Vagina (tissue), 2 donors: ENCODE measurements at regions of chr3 and their contacts with region 1.

Region 1: DNA sequence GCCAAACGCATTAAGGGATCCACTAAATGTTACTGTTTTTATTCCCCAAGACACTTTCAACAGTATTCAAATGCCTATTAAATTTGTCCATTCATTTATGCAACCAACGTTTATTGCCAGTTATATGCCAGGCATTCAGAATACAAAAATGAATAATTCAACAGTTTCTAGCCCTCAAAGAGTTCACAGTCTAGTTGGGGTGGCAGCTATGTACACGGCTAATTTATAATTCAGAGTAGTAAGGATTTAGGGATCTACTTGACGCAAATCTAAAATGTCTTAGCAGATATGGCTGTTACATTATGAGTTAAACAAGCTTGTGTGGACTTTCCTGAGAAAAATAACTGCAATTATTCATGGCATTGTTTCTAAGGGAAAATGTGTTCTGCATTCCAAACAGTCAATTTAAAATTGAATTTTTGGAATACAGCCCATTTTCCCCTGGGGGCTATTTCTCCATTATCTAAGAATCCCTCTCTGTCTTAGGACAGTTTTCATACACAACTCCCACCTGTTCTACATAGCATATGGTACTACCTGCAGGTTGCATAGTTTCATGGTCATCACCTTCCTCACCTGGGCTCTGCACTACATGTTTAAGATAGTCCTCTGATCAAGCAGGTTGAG is 11.5 kb upstream of the MSL2 start:
- DNase-seq: no peak
- H3K4me3 ChIP-seq: no peak overlapping the region
- H3K27ac ChIP-seq: no peak overlapping the region
- H3K4me1 ChIP-seq: no peaks in the 10 kb centered on the region
- H3K27me3 ChIP-seq: no peaks in the 10 kb centered on the region
- CTCF ChIP-seq: no peak
- POLR2A ChIP-seq: no peak

Region 2: GRCh38 chr3:136134091-136134490 is 73.5 kb before region 1 on chr3:
- intact Hi-C with region 1: loop called (anchors 2 kb)
- DNase-seq: no peak
- H3K4me3 ChIP-seq: no peak overlapping the region
- H3K27ac ChIP-seq: no peak overlapping the region
- H3K4me1 ChIP-seq: no peaks in the 10 kb centered on the region
- H3K27me3 ChIP-seq: no peaks in the 10 kb centered on the region
- CTCF ChIP-seq: no peak
- POLR2A ChIP-seq: no peak